ENCODE measurements at regions of chr1 and their contacts with region 1.

Region 1: GRCh38 chr1:241762713-241763339 is 85.2 kb upstream of the EXO1 start:
- DNase-seq: peak; percentile 23
- H3K4me3 Mint-ChIP-seq: no peak overlapping the region
- H3K27ac Mint-ChIP-seq: no peak overlapping the region
- H3K4me1 Mint-ChIP-seq: peaks cover 7% of the 10 kb centered on the region
- H3K27me3 Mint-ChIP-seq: no peaks in the 10 kb centered on the region
- CTCF ChIP-seq: no peak

Region 2: DNA sequence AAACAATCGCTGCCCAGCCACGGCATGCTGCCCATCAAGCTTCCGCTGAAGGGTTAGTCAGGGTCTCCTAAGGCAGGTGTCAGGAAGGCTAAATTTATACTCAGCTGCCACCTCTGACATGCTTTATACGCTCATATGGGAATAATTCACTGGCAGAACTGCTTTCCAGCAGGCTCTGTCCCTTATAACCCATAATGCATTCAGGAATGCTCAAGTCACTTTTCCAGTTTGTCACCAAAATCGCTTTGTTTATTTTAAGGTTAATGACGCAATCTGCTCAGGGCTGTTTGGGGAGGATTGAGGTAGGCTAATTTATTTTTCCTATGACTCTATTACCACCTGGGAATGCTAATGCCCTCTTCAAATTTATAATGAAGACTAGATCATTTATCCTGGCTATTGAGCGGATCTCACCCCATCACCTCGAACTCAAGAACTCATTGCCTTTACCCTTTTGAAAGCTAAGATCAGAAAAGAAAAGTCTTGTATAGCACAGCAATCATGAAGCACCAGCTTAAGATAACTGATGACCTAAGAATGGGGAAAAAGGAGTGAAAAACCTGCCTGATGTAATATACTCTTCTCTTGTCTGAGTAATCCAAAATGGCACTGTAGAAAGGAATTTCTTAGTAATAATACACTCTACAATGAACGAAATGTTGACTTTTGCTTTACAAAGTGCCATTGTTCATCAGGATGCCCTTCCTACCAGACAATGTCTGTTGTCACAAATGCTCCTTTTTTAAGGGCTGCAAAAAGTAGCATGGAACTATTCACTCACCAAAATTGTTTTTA is 12.7 kb before region 1 on chr1:
- CTCF ChIA-PET with region 1: interaction called, 11 read pairs
- POLR2A ChIA-PET with region 1: interaction called, 11 read pairs
- intact Hi-C with region 1: no loop called
- DNase-seq: no peak
- H3K4me3 Mint-ChIP-seq: peak overlapping the region; percentile 72
- H3K27ac Mint-ChIP-seq: peak overlapping the region; percentile 81
- H3K4me1 Mint-ChIP-seq: peaks cover 16% of the 10 kb centered on the region
- H3K27me3 Mint-ChIP-seq: no peaks in the 10 kb centered on the region
- CTCF ChIP-seq: no peak